Common myeloid progenitor, CD34-positive (primary cell): ENCODE measurements at regions of chr11 and their contacts with region 1.

Region 1: GRCh38 chr11:47248664-47249377 is at the start of gene ACP2:
- DNase-seq: peak; percentile 92 to 95 (median 93)
- H3K4me3 ChIP-seq: peak within 1 kb of the TSS; percentile 75 to 99 (median 94)
- H3K27ac ChIP-seq: peak within 1 kb of the TSS; percentile 94 to 97
- H3K4me1 ChIP-seq: peaks cover 11 to 21% (median 17%) of the 10 kb centered on the region in 4 experiments
- H3K27me3 ChIP-seq: no peaks in the 10 kb centered on the region

Region 2: DNA sequence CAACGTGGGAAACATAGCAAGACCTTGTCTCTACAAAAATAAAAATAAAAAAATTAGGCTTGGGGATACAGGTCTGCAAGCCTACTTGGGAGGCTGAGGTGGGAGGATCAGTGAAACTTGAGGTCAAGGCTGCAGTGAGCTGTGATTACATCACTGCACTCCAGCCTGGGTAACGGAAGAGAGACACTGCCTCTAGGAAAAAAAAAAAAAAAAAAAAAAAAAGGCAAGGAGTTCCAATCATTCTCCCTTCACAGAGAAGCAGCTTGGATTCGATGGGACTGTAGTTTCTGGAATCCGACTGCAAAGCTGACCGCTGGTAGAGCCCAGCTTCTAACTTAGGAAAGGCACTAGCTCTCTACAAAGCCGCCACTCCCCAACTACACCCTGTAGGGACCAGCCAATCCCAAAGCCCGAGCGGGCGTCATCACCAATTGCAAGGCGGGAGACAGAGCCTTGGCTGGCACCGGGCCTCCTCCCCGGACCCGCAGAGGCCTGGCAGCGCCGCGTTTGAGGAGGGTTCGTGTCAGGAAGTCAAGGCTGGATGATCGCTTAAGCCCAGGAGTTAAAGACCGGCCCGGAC is 34.7 kb before region 1 on chr11:
- CTCF ChIA-PET with region 1: interaction called, 16 read pairs
- POLR2A ChIA-PET with region 1: interaction called, 9 read pairs
- DNase-seq: peak; percentile 90 to 93 (median 91)
- H3K4me3 ChIP-seq: peak overlapping the region; percentile 70 to 95 (median 81)
- H3K27ac ChIP-seq: peak overlapping the region; percentile 79 to 87
- H3K4me1 ChIP-seq: peaks cover 10 to 27% (median 23%) of the 10 kb centered on the region in 4 experiments
- H3K27me3 ChIP-seq: no peaks in the 10 kb centered on the region

Region 3: GRCh38 chr11:47269002-47269828 is 20.4 kb after region 1 on chr11:
- CTCF ChIA-PET with region 1: interaction called, 145 read pairs
- POLR2A ChIA-PET with region 1: interaction called, 4 read pairs
- DNase-seq: peak; percentile 90 to 96 (median 95)
- H3K4me3 ChIP-seq: peak overlapping the region; percentile 65 to 88 (median 79)
- H3K27ac ChIP-seq: peak overlapping the region; percentile 93 to 95
- H3K4me1 ChIP-seq: peaks cover 32 to 73% (median 71%) of the 10 kb centered on the region in 4 experiments
- H3K27me3 ChIP-seq: no peaks in the 10 kb centered on the region